Motor neuron (in vitro differentiated cells): ENCODE measurements at regions of chr17 and their contacts with region 1.

Region 1: DNA sequence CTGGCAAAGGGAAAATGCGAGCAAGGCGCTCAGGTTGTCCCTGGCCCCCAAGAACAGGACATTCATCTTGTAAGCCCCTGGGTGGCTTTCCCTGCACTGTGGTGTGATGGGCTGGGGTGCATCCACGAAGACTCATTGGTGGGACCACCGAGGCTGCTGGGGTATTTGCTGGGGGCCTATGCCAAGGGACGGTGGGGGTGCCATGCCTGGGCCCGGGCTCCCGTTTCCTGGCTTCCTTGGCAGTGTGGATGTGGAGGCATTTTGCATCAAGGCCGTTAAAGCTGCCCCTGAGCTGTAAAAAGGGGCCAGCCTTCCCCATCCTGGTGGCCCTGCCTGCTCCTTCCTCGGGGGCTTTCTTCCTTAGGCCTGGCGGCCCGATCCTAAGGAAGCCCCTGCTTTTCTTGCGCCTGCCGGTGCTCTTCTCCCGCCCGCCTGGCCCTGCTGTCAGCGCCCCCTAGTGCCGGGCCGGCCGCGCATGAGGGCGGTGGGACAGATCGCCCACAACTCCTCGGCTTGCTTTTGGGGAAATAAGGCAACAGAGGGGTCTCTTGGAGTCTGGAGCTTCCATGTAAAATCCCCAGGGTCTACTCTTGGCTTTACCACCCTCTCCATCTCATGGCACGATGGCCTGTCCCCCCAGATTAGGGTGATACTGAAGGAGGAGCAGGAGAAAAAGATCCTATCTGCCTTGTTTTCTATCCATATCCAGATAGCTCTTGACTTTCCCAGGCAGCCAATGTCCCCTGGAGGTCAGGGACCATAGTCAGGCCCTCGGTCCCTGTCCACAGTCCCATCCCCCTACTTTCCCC is 9.8 kb upstream of the TBX2 start:
- ATAC-seq: peak; percentile 56 to 86 (median 66)
- H3K4me3 ChIP-seq: no peak overlapping the region
- H3K27ac ChIP-seq: no peak overlapping the region
- H3K4me1 ChIP-seq: peaks cover 0 to 3% of the 10 kb centered on the region in 2 donors

Region 2: DNA sequence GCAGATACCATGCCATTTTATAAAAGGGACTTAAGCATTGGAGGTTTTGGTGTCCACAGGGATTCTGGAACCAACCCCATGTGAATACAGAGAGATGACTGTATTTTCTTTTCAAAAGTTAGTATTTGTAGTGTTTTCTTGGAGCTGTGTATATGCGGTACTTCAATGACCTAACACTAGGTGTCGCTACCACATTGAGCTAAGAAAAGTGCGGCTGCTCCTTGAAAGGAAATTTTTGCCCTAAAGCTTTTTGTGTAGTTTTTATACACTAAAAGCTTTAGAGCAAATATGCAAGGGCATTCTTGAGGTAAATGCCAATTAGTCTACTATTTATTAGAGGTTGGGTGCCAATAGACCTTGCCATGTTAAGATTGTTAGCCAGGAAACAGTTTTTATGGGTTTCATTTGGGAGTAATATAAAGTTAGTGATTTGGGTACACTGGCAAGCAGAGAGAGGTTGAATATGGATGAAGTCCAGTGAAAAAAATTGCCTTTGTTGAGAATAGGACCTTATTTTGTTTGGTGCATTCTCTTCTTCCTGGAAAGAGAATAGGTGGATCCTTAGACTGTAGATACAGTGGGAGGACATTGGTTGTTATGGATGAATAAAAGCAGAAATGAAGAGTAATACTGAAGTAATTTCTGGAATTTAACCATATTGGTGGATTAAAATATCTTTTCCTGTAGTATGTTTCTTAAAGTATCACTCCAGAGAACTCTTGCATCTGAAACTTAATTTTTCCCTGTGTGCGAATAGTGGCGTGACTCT is 668.9 kb before region 1 on chr17:
- in situ Hi-C with region 1: loop called in 5 of 9 experiments (anchors 10 to 25 kb)
- ATAC-seq: peak in 5 of 8 experiments; percentile 36 to 80 (median 72)
- H3K4me3 ChIP-seq: no peak overlapping the region
- H3K27ac ChIP-seq: no peak overlapping the region
- H3K4me1 ChIP-seq: no peaks in the 10 kb centered on the region

Region 3: GRCh38 chr17:60989379-60989778 is 400.5 kb before region 1 on chr17:
- in situ Hi-C with region 1: loop called in 1 of 9 experiments (anchors 25 kb)
- ATAC-seq: peak in 1 of 8 experiments; percentile 54
- H3K4me3 ChIP-seq: no peak overlapping the region
- H3K27ac ChIP-seq: no peak overlapping the region
- H3K4me1 ChIP-seq: no peaks in the 10 kb centered on the region

Region 4: DNA sequence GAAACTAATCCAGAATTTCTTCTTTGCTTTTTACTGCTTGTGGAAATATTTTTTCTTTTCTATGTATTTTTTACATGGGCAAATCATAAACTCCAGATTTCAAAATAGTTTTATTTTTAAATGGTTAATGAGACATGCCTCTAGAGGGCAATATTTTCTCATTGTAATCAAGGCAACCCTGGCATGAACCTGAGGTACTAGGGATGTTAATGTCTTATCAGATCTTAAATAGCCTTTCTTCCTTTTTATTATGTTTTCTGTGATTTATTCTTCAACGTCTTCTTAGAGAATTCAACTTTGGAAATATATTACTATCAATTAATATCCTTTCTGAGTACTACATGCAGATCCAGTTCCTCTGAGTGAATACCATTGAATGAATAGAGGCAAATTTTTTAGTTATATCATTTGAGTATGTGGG is 387.5 kb before region 1 on chr17:
- in situ Hi-C with region 1: loop called in 5 of 9 experiments (anchors 10 to 25 kb)
- ATAC-seq: peak in 2 of 8 experiments; percentile 35 to 36
- H3K4me3 ChIP-seq: no peak overlapping the region
- H3K27ac ChIP-seq: no peak overlapping the region
- H3K4me1 ChIP-seq: no peaks in the 10 kb centered on the region

Region 5: GRCh38 chr17:61504697-61505349 is 114.9 kb after region 1 on chr17:
- in situ Hi-C with region 1: no loop called
- ATAC-seq: peak in 2 of 8 experiments; percentile 29 to 31
- H3K4me3 ChIP-seq: no peak overlapping the region
- H3K27ac ChIP-seq: no peak overlapping the region
- H3K4me1 ChIP-seq: no peaks in the 10 kb centered on the region